Dendritic cell treated with granulocyte-macrophage colony-stimulating factor and Interleukin-4, amounts not matched to agents 40 ng/mL and 50 ng/mL, for 4 days (primary cell): ENCODE measurements at regions of chr2 and their contacts with region 1.

Region 1: DNA sequence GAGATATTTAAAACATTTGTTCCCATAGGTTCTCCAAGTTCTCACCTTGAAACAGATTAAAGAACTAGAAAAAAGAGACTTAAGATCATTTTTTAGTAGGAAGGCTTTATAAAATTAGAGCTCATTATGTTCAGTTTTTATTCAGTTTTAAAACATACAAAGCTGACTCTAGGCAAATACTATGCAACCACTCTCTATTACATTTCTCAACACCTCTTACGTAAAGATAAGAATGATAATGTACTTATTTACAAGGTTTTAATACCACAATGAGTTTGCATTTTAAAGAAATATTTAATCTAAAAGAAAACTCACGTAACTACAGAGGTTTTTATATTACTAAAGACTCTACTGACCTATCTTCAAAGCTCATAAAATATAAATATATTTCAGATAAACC is 68.8 kb downstream of the TMEM131 start:
- H3K4me3 Mint-ChIP-seq: no peak overlapping the region
- H3K27ac Mint-ChIP-seq: no peak overlapping the region
- H3K4me1 Mint-ChIP-seq: peaks cover 35% of the 10 kb centered on the region
- H3K27me3 Mint-ChIP-seq: no peaks in the 10 kb centered on the region

Region 2: DNA sequence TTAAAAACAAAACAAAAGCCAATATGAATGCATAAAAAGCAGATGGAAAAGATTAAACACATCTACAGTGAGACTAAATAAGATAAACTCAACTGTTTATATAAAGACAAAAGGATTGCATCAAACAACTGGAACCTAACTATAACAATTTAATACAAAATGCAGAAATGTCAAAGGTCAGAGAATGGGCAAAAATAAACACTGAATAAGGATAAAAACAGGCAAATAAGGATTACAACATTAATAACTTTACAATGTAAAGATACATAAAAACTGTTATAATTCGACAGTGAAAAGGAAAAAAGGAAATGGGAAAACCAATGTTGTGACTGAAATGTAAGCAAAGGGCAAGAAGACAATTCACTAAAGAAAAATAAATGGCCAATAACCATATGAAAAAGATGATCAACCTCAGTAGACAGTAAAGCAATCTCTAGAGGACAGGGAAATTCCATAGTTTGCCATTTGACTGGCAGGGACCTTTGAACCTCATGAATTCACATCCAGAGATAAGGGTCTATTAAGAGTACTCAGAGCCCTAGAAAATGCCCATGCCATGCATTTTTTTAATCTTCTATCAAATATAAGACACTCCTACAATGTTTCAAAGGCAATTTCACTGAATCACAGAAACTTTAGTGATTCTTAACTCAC is 14.9 kb before region 1 on chr2:
- intact Hi-C with region 1: loop called (anchors 2 kb)
- H3K4me3 Mint-ChIP-seq: no peak overlapping the region
- H3K27ac Mint-ChIP-seq: peak overlapping the region; percentile 34
- H3K4me1 Mint-ChIP-seq: peaks cover 49% of the 10 kb centered on the region
- H3K27me3 Mint-ChIP-seq: no peaks in the 10 kb centered on the region